Heart right ventricle (tissue), 16 donors: ENCODE measurements at regions of chr11 and their contacts with region 1.

Region 1: DNA sequence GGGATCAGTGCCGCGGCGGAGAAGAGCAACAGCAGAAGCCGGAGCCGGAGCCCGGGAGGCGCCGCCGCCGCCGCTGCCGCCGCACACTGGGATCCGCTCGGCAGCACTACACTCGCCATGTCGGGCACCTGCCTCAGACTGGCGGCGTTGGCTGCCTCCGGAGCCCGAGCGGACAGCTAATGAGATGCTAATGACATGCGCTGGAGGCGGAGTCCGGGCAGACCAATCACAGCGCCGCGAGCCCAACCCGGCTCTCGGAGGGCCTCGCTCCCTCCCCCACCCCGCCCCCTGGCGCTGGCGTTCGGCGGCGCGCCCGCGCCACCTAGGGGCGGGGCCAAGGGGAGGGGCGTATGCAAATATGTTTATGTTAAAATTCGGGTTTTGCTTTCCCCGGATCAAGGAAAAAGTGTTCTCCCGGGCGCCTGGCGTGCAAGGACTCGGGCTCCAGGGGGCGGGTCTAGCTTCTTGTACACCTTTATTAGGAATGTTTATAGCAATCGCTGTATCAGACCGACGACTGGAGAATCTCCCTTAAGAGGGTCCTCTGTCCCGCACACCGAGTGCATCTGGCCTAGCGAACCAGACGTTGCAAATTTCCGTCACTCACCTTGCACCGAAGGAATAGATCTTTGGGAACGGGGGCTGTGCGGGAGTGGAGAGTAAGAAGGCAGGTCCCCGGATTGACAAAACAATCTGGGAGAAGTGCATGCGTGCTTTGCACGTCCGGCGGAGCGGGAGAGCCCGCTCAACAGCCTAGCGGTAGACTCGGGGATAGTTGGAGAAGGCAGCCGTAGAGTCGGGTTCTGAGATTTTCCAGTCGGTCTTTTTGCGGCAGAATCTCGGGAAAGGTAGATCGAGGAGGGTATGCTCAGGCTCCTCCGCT is at the start of gene CADM1:
- DNase-seq: peak; percentile 92 to 94
- ATAC-seq: peak; percentile 95 to 97 (median 96)
- H3K4me3 ChIP-seq: peak within 1 kb of the TSS; percentile 36 to 77 (median 65)
- H3K27ac ChIP-seq: peak within 1 kb of the TSS; percentile 73 to 90 (median 81)
- H3K4me1 ChIP-seq: peaks cover 0 to 44% (median 18%) of the 10 kb centered on the region in 9 donors
- H3K27me3 ChIP-seq: peaks cover 0 to 86% (median 21%) of the 10 kb centered on the region in 7 donors
- CTCF ChIP-seq: peak; percentile 50 to 78 (median 71)
- total RNA-seq, gene CADM1: 28.0 to 83.0 (median 42.4) TPM

Region 2: DNA sequence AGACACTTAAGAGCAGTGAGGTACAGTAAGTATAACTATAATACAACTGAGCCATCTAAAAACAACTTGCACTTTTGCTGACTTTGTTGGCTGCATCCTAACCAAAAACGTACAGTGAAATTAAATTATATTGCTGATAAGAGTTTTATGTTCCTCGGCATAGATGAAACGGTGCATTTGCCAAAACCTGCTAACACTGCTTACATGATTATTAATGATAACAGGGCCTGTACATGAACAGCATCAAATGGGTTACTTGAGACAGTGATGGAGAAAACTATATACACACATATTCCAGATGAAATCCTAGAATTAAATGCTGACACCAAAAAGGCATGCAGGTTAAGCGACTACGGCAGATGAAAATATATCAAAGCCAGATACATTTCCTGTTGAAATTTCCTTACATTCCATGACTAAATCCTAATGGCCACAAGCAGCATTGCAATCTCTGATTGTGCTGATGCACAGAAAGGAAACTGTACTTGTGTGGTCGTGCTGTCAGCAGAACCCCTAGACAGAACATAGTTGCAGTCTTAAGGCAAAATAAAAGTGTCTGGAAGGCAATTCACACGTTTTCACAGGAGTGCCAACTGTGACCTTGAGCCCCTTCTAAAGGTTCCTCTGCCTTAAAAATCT is 144.2 kb before region 1 on chr11:
- intact Hi-C with region 1: loop called in 1 of 10 experiments (anchors 10 kb)
- DNase-seq: no peak
- ATAC-seq: no peak
- H3K4me3 ChIP-seq: no peak overlapping the region
- H3K27ac ChIP-seq: no peak overlapping the region
- H3K4me1 ChIP-seq: peaks cover 0 to 31% (median 0%) of the 10 kb centered on the region in 9 donors
- H3K27me3 ChIP-seq: no peaks in the 10 kb centered on the region
- CTCF ChIP-seq: no peak

Region 3: GRCh38 chr11:115385226-115385625 is 119.3 kb before region 1 on chr11:
- intact Hi-C with region 1: no loop called
- DNase-seq: no peak
- ATAC-seq: no peak
- H3K4me3 ChIP-seq: no peak overlapping the region
- H3K27ac ChIP-seq: no peak overlapping the region
- H3K4me1 ChIP-seq: peaks cover 0 to 15% (median 0%) of the 10 kb centered on the region in 9 donors
- H3K27me3 ChIP-seq: peaks cover 0 to 5% (median 0%) of the 10 kb centered on the region in 7 donors
- CTCF ChIP-seq: no peak

Region 4: DNA sequence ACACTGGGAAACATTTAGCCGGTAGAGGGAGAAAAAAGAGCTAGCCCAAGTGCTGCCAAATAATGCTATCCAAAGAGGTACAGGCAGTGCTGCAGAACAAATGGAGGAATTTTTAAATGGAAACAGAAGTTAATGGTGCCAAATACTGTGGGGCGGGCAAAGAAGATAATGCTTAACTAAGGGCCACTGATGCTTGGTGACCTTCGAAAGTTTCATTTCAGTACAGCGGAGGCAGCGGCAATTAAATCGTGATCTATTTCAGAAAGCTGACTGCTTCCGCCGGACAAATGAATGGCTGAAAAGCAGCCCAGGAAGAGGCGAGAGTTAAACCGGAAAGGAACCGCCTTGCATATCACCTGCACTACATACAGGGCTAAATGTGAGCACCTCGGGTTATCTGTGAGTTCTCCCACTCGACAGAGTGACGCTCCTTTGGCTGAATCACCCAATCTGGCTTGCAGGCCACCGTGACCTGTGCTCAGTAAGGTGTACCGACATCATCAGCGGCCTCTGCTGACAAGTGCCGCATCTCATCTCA is 42.4 kb before region 1 on chr11:
- intact Hi-C with region 1: no loop called
- DNase-seq: peak in 1 of 2 donors; percentile 8
- ATAC-seq: peak in 7 of 8 donors; percentile 17 to 85 (median 80)
- H3K4me3 ChIP-seq: peak overlapping the region in 9 of 10 donors; percentile 12 to 45 (median 30)
- H3K27ac ChIP-seq: peak overlapping the region in 7 of 10 donors; percentile 32 to 67 (median 44)
- H3K4me1 ChIP-seq: no peaks in the 10 kb centered on the region
- H3K27me3 ChIP-seq: no peaks in the 10 kb centered on the region
- CTCF ChIP-seq: peak in 2 of 9 donors; percentile 5 to 20

Region 5: DNA sequence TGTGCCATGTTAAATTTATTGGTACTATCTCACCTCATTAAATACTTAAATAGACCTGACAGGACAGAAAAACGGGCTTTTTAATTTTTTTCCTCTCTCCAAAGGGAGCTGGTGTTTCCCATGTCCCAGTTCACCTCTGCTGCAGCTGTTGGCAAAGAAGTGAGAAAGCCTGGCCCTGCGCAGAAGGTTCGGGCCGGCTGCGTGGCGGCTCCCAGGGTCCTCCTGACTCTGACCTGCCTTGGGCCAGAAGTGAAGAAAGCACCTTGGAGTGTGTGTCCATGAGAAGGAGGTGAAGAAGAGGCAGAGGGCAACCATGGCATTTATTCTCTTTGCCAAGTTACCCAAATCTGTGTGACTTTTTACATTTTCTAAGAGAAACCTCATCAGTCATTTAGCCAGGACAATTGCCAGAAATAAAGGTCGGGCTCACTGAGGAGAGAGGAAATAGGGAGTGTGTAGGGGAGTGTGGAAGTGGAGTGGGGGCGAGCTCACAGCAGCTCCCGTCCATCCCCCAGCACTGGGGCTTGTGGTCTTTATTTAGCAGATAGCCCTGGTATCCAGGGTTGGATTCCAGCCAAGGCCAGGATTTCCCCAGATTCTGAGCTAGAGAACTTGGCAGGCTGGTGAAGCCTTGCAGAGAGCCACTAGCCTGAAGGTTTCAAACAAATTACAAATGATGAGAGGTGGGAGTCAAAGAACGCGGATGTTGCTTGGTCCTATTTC is 102.1 kb after region 1 on chr11:
- intact Hi-C with region 1: loop called in 2 of 10 experiments (anchors 10 kb)
- DNase-seq: peak; percentile 31 to 74
- ATAC-seq: peak; percentile 57 to 87 (median 72)
- H3K4me3 ChIP-seq: no peak overlapping the region
- H3K27ac ChIP-seq: peak overlapping the region in 9 of 10 donors; percentile 22 to 86 (median 74)
- H3K4me1 ChIP-seq: peaks cover 0 to 27% (median 11%) of the 10 kb centered on the region in 9 donors
- H3K27me3 ChIP-seq: peaks cover 0 to 18% (median 0%) of the 10 kb centered on the region in 7 donors
- CTCF ChIP-seq: no peak

Region 6: DNA sequence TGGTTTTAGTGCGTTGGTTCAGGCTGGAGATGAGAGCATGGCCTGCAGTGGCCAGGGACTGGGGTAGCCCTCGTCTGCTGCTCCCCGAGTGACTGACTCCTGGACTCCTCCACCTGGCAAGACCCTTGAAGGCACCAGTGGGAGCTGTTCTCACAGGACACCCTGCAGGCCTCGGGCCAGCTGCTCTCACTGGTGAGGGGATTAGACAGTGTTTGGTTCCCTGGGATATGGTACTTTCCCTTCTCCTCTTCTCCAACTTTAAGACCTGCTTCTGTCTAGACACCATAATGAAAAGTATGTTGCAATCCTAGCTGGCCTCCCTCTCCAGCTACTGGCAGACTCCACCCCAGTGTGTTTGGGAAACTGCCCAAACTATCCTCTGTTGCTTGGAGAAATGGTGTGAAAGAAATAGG is 168.5 kb after region 1 on chr11:
- intact Hi-C with region 1: loop called in 6 of 10 experiments (anchors 5 to 10 kb)
- DNase-seq: peak; percentile 26 to 38
- ATAC-seq: peak; percentile 64 to 87 (median 78)
- H3K4me3 ChIP-seq: no peak overlapping the region
- H3K27ac ChIP-seq: peak overlapping the region in 5 of 10 donors; percentile 12 to 57 (median 40)
- H3K4me1 ChIP-seq: peaks cover 0 to 14% (median 4%) of the 10 kb centered on the region in 9 donors
- H3K27me3 ChIP-seq: peaks cover 0 to 7% (median 0%) of the 10 kb centered on the region in 7 donors
- CTCF ChIP-seq: no peak

Region 7: DNA sequence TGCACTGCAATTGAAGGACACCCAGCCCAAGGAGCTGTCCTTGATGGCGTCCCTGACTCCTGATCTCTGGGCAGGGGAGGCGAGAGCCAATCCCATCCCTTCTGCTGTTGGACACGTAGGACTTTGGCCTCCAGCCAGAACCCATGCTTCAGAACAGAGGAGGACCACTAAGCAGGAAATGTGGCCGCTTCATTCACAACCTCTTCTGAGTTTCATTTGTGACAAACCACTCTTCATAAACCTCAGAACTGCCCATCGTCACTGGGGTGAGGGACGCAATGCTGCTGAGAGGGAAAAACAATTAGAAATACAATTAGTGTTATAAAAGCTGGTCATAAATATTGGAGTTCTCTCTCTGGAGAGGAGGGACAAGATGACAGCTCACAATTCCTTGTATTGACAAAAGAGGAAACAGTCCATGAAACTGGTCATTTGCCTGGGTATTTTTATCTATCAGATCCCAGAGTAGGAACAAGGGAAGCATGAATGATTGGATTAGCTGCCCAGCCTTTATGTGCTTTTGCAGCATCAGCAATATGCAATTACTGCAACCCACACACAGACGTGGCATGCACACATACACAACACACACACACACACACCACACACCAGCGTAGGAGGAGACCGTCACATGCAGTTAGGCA is 216.2 kb after region 1 on chr11:
- intact Hi-C with region 1: no loop called
- DNase-seq: no peak
- ATAC-seq: no peak
- H3K4me3 ChIP-seq: no peak overlapping the region
- H3K27ac ChIP-seq: no peak overlapping the region
- H3K4me1 ChIP-seq: peaks cover 0 to 20% (median 0%) of the 10 kb centered on the region in 9 donors
- H3K27me3 ChIP-seq: peaks cover 0 to 9% (median 0%) of the 10 kb centered on the region in 7 donors
- CTCF ChIP-seq: no peak